ENCODE measurements at regions of chr9 and their contacts with region 1.

Region 1: GRCh38 chr9:99326112-99326916 is 104.2 kb downstream of the SEC61B start:
- DNase-seq: no peak
- H3K4me3 ChIP-seq: no peak overlapping the region
- H3K27ac ChIP-seq: no peak overlapping the region
- H3K4me1 ChIP-seq: no peaks in the 10 kb centered on the region
- H3K27me3 ChIP-seq: peaks cover 3% of the 10 kb centered on the region
- CTCF ChIP-seq: peak in 1 of 2 donors; percentile 1

Region 2: DNA sequence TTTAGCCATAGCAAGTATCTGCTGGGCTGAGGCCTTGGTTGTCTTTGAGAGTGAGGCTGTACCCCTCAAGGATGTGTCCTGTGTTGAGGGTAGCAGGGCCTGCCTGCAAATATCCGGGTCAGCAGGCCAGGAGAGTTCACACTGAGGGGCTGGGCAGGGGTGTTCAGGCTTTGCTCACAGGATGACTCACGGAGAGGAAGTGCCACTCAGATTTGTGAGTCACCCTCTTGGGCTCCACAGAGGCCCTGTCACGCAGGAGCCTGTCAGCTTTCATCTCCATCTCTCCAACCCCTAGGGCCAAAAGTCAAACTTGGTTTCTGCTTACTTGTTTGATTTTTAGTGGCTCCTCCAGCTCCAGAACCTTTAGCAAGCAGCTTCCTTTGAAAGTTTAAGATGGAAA is 107.2 kb after region 1 on chr9:
- CTCF ChIA-PET with region 1: no interaction called
- dilution Hi-C with region 1: no loop called
- in situ Hi-C with region 1: loop called in 1 of 2 experiments (anchors 25 kb)
- intact Hi-C with region 1: no loop called
- DNase-seq: peak; percentile 83
- H3K4me3 ChIP-seq: no peak overlapping the region
- H3K27ac ChIP-seq: peak overlapping the region; percentile 14
- H3K4me1 ChIP-seq: peaks cover 16% of the 10 kb centered on the region
- H3K27me3 ChIP-seq: no peaks in the 10 kb centered on the region
- CTCF ChIP-seq: no peak